ENCODE measurements at regions of chr15 and their contacts with region 1.

Region 1: GRCh38 chr15:88638626-88639372 is at the start of gene ISG20:
- DNase-seq: peak; percentile 96 to 99 (median 99)
- H3K4me3 ChIP-seq: peak within 1 kb of the TSS; percentile 80
- H3K4me3 Mint-ChIP-seq: peak within 1 kb of the TSS; percentile 86 to 97 (median 93)
- H3K27ac ChIP-seq: peak within 1 kb of the TSS; percentile 96
- H3K27ac Mint-ChIP-seq: peak within 1 kb of the TSS; percentile 91 to 100 (median 98)
- H3K4me1 ChIP-seq: peaks cover 90% of the 10 kb centered on the region
- H3K4me1 Mint-ChIP-seq: peaks cover 65 to 87% (median 87%) of the 10 kb centered on the region in 3 donors
- H3K27me3 ChIP-seq: no peaks in the 10 kb centered on the region
- H3K27me3 Mint-ChIP-seq: peaks cover 0 to 3% of the 10 kb centered on the region in 2 donors
- total RNA-seq, gene ISG20: 22.5 to 27.2 TPM

Region 2: GRCh38 chr15:88627463-88627862 is 11.3 kb before region 1 on chr15:
- CTCF ChIA-PET with region 1: interaction called, 35 read pairs
- POLR2A ChIA-PET with region 1: interaction called, 20 read pairs
- DNase-seq: peak in 4 of 5 donors; percentile 57 to 92 (median 86)
- H3K4me3 ChIP-seq: peak overlapping the region; percentile 32
- H3K4me3 Mint-ChIP-seq: peak overlapping the region; percentile 21 to 68 (median 60)
- H3K27ac ChIP-seq: peak overlapping the region; percentile 39
- H3K27ac Mint-ChIP-seq: peak overlapping the region; percentile 72 to 98 (median 88)
- H3K4me1 ChIP-seq: peaks cover 97% of the 10 kb centered on the region
- H3K4me1 Mint-ChIP-seq: peaks cover 85 to 98% (median 95%) of the 10 kb centered on the region in 3 donors
- H3K27me3 ChIP-seq: no peaks in the 10 kb centered on the region
- H3K27me3 Mint-ChIP-seq: peaks cover 0 to 1% of the 10 kb centered on the region in 2 donors

Region 3: DNA sequence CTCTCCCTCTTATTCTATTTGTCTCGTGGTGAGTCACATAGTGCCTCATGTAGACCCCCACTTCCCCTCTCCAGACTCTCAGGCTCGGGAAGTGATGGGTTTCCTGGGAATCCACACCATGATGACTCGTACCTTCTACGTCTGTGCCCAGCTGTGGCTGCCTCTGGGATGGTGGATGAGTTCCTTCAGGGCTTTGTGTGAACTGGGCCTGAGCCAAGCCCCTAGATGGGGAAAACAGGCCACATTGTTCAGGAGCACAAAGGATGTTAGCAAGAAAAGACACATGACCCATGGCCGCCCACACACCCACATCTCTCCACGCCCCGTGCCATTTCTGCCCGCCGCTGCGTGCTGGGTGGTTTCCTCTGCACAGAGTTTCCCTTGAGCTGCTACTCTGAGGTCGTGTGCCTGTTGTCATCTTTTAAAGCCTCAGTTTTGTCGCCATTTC is 10.5 kb after region 1 on chr15:
- CTCF ChIA-PET with region 1: interaction called, 21 read pairs
- POLR2A ChIA-PET with region 1: interaction called, 5 read pairs
- DNase-seq: peak; percentile 36 to 83 (median 63)
- H3K4me3 ChIP-seq: peak overlapping the region; percentile 15
- H3K4me3 Mint-ChIP-seq: peak overlapping the region; percentile 9 to 83 (median 73)
- H3K27ac ChIP-seq: no peak overlapping the region
- H3K27ac Mint-ChIP-seq: peak overlapping the region; percentile 89 to 99 (median 96)
- H3K4me1 ChIP-seq: peaks cover 85% of the 10 kb centered on the region
- H3K4me1 Mint-ChIP-seq: peaks cover 75 to 93% (median 83%) of the 10 kb centered on the region in 3 donors
- H3K27me3 ChIP-seq: no peaks in the 10 kb centered on the region
- H3K27me3 Mint-ChIP-seq: no peaks in the 10 kb centered on the region

Region 4: DNA sequence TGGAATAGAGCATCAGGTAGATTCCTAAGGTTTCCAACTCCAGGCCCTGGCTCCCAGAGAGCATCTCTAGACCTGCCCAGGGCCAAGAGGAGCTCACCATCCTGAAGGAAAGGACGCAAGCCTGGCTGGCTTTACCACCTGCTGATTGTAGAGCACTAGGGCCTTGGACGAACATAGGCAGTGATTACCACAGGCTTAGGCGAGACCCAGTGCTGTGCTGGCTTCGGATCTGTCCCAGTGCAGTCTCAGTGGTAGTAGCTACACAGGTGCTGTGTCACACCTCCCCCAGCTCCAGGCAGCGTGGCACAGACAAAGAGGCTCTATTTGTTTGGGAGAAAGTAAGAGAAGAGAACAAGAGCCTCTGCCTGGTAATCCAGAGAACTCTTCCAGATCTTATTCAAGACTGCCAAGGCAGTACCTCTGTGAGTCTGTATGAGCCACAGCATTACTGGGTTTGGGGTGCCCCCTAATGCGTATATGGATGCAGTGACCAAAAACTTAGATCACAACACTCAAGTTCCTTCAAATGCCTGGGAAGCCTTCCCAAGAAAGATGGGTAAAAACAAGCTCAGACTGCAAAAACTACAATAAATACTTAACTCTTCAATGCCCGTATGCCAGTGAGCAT is 25.5 kb after region 1 on chr15:
- CTCF ChIA-PET with region 1: interaction called, 14 read pairs
- POLR2A ChIA-PET with region 1: interaction called, 7 read pairs
- DNase-seq: peak; percentile 18 to 74 (median 48)
- H3K4me3 ChIP-seq: no peak overlapping the region
- H3K4me3 Mint-ChIP-seq: no peak overlapping the region
- H3K27ac ChIP-seq: no peak overlapping the region
- H3K27ac Mint-ChIP-seq: peak overlapping the region in 5 of 8 donors; percentile 54 to 87 (median 65)
- H3K4me1 ChIP-seq: peaks cover 26% of the 10 kb centered on the region
- H3K4me1 Mint-ChIP-seq: peaks cover 8 to 28% (median 12%) of the 10 kb centered on the region in 3 donors
- H3K27me3 ChIP-seq: no peaks in the 10 kb centered on the region
- H3K27me3 Mint-ChIP-seq: peaks cover 5 to 6% of the 10 kb centered on the region in 2 donors

Measured in CD8-positive, alpha-beta memory T cell (primary cell).